HEK293 (cell line): ENCODE measurements at regions of chr13 and their contacts with region 1.

Region 1: GRCh38 chr13:51452361-51453206 is at the start of gene INTS6:
- H3K4me3 ChIP-seq: peak within 1 kb of the TSS; percentile 73
- H3K27ac ChIP-seq: peak within 1 kb of the TSS; percentile 95
- H3K4me1 ChIP-seq: no peaks in the 10 kb centered on the region; the same call in 1 of the 2 replicates
- CTCF ChIP-seq: no peak

Region 2: GRCh38 chr13:51465124-51465523 is 12.5 kb after region 1 on chr13:
- CTCF ChIA-PET with region 1: interaction called, 4 read pairs
- POLR2A ChIA-PET with region 1: interaction called, 12 read pairs
- H3K4me3 ChIP-seq: no peak overlapping the region
- H3K27ac ChIP-seq: no peak overlapping the region
- H3K4me1 ChIP-seq: no peaks in the 10 kb centered on the region
- CTCF ChIP-seq: no peak

Region 3: DNA sequence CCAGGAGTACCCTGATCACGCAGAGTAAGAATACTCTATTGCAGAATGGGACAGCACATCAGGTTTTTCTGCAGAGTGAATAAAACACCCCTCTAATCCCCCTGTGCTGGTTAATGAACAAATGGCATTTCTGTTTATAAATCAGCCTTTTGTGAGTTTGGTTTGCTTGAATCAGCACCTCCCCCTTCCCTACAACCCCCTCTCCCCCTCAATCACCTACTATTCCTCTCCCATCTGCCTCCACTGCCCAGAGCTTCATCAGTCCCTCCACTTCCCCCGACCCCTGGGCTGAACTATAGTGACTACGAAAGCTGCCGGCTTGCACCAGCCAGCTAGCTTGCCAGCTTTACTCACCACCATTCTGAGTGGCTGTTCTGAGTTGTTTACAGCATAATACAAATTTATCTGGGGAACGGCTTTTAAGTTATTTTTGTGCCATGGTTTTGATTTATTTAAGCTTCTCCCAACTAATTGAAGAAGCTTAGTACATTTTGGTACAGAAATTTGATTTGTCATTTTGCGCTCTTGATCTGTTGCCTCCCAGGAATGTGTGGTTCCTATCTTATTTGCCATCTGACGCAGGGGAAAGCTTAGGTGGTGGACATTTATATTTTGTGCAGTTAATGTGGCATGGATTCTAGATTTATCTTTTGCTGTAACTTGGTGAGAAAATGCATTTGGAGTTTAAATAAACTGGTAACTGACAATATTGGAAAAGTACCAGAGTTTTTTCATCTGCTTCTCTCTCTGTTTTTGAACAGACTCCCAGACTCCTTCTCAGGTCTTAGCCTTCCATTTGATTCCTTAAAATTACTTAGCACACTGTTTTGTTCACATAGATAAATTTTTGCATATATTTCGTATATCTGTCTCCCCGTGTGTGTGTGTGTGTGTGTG is 90.0 kb after region 1 on chr13:
- CTCF ChIA-PET with region 1: no interaction called
- POLR2A ChIA-PET with region 1: interaction called, 11 read pairs
- H3K4me3 ChIP-seq: no peak overlapping the region
- H3K27ac ChIP-seq: peak overlapping the region; percentile 34
- H3K4me1 ChIP-seq: peaks cover 3% of the 10 kb centered on the region; the same call in 1 of the 2 replicates
- CTCF ChIP-seq: no peak

Region 4: DNA sequence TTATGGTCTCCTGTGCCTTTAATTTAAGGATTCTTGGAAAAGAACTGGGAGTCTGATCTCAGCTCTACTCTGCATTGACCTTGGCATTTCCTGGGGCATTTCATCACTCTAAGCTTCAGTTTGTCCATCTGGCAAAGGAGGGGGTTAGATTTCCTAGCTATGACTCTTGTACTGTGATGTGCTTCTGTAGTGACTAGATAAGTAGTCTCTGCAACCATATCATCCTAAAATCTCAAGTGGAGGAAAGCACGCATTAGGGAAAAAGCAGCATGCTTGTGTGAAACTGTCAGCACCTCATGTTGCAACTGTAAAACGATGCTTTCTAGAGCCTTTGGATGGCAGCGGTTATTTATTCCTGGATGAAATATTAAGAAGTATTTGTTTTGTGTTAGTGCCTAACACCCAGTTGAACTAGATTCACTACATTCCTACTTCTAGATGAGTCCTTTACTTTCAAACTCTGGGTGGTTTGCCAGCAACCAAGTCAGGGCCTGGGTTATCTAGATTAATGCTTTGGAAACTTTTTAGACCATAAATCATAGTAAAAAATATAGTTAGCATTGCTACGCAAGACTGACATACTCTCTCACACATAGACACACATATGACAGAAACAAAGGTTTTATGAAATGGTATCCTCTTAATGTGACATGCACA is 138.5 kb after region 1 on chr13:
- CTCF ChIA-PET with region 1: no interaction called
- POLR2A ChIA-PET with region 1: interaction called, 77 read pairs
- H3K4me3 ChIP-seq: no peak overlapping the region
- H3K27ac ChIP-seq: no peak overlapping the region
- H3K4me1 ChIP-seq: peaks cover 34% of the 10 kb centered on the region
- CTCF ChIP-seq: no peak

Region 5: GRCh38 chr13:51785712-51786424 is 333.3 kb after region 1 on chr13:
- CTCF ChIA-PET with region 1: no interaction called
- POLR2A ChIA-PET with region 1: interaction called, 27 read pairs
- H3K4me3 ChIP-seq: no peak overlapping the region
- H3K27ac ChIP-seq: peak overlapping the region; percentile 22; the same call in 1 of the 2 replicates
- H3K4me1 ChIP-seq: peaks cover 13% of the 10 kb centered on the region
- CTCF ChIP-seq: no peak